ENCODE measurements at regions of chr5 and their contacts with region 1.

Region 1: GRCh38 chr5:10233505-10233904 is 16.2 kb downstream of the ATPSCKMT start:
- DNase-seq: peak; percentile 67 to 71
- H3K4me3 ChIP-seq: no peak overlapping the region
- H3K4me3 Mint-ChIP-seq: no peak overlapping the region
- H3K27ac Mint-ChIP-seq: no peak overlapping the region
- H3K4me1 ChIP-seq: no peaks in the 10 kb centered on the region
- H3K4me1 Mint-ChIP-seq: no peaks in the 10 kb centered on the region
- H3K27me3 ChIP-seq: no peaks in the 10 kb centered on the region
- H3K27me3 Mint-ChIP-seq: no peaks in the 10 kb centered on the region
- CTCF ChIP-seq: peak; percentile 27 to 46

Region 2: DNA sequence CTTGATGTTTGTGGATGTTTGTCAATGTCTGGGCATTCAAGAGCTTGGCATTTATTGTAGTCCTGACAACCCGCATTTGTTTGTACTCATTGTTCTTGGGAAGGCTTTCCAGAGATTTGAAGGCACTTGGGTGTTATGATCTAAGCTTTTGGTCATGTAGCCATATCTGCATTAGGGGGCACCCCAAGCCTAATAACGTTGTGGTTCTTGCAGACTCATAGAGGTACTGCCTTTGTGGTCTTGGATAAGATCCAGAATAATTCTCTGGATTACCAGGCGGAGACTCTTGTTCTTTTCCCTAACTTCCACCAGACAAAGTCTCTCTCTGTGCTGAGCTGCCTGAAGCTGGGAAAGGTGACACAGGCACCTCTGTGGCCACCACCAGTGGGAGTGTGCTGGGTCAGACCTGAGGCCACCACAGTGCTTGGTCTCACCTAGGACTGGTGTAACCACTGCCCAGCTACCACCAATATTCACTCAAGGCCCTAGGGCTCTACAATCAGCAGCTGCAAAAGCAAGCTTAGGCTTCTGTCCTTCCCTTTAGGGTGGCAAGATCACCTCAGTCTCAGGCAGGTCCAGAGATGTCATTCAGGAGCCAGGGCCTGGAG is 458.9 kb before region 1 on chr5:
- CTCF ChIA-PET with region 1: interaction called, 3 read pairs
- POLR2A ChIA-PET with region 1: no interaction called
- intact Hi-C with region 1: loop called (anchors 2 kb)
- DNase-seq: peak in 1 of 2 experiments; percentile 47
- H3K4me3 ChIP-seq: no peak overlapping the region
- H3K4me3 Mint-ChIP-seq: no peak overlapping the region
- H3K27ac Mint-ChIP-seq: no peak overlapping the region
- H3K4me1 ChIP-seq: no peaks in the 10 kb centered on the region
- H3K4me1 Mint-ChIP-seq: no peaks in the 10 kb centered on the region
- H3K27me3 ChIP-seq: no peaks in the 10 kb centered on the region
- H3K27me3 Mint-ChIP-seq: no peaks in the 10 kb centered on the region
- CTCF ChIP-seq: peak in 1 of 2 experiments; percentile 31

Region 3: GRCh38 chr5:9829621-9830567 is 403.6 kb before region 1 on chr5:
- CTCF ChIA-PET with region 1: no interaction called
- POLR2A ChIA-PET with region 1: no interaction called
- intact Hi-C with region 1: loop called (anchors 2 kb)
- DNase-seq: peak in 1 of 2 experiments; percentile 30
- H3K4me3 ChIP-seq: no peak overlapping the region
- H3K4me3 Mint-ChIP-seq: peak overlapping the region; percentile 1
- H3K27ac Mint-ChIP-seq: peak overlapping the region; percentile 14
- H3K4me1 ChIP-seq: peaks cover 53% of the 10 kb centered on the region
- H3K4me1 Mint-ChIP-seq: peaks cover 40% of the 10 kb centered on the region
- H3K27me3 ChIP-seq: no peaks in the 10 kb centered on the region
- H3K27me3 Mint-ChIP-seq: no peaks in the 10 kb centered on the region
- CTCF ChIP-seq: no peak

Region 4: DNA sequence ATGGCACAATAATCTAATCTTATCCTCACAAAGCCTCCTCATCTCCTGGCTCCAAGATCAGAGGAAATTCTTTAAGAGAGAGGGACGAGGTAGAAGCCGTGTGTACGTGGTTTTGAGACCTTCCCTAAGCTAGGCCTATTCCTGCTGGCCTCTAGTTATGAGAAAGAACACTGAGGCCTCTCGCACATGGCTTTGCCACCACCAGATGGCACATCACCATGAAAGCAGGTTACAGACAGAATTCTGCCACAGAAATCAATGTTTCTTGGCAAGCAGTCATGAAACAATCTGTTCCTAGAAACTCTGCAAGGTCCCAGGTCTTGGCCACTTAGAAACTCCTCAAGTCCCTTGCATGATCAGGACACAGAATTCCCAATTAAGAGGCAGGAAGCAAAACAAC is 335.2 kb before region 1 on chr5:
- CTCF ChIA-PET with region 1: no interaction called
- POLR2A ChIA-PET with region 1: no interaction called
- intact Hi-C with region 1: loop called (anchors 5 kb)
- DNase-seq: peak in 1 of 2 experiments; percentile 49
- H3K4me3 ChIP-seq: no peak overlapping the region
- H3K4me3 Mint-ChIP-seq: no peak overlapping the region
- H3K27ac Mint-ChIP-seq: no peak overlapping the region
- H3K4me1 ChIP-seq: no peaks in the 10 kb centered on the region
- H3K4me1 Mint-ChIP-seq: no peaks in the 10 kb centered on the region
- H3K27me3 ChIP-seq: no peaks in the 10 kb centered on the region
- H3K27me3 Mint-ChIP-seq: no peaks in the 10 kb centered on the region
- CTCF ChIP-seq: peak; percentile 55 to 76

Region 5: DNA sequence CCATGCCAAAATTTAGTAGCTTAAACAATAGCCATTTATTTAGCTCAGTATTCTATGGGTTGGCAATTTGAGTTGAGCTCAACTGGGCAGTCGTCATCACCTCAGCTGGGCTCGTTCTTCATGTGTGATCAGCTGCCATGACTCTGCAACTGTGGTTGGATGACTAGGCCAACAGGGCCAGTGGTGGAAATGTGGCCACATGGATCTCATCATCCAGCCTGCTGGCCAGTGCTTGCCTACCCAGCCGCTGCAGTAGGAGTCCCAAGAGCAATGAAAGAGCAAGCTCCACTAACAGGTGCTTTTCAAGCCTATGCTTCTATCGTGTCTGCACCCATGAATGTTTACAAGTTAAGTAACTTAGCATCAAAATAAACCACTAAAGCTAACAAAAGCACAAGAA is 141.8 kb before region 1 on chr5:
- CTCF ChIA-PET with region 1: no interaction called
- POLR2A ChIA-PET with region 1: no interaction called
- intact Hi-C with region 1: no loop called
- DNase-seq: no peak
- H3K4me3 ChIP-seq: no peak overlapping the region
- H3K4me3 Mint-ChIP-seq: no peak overlapping the region
- H3K27ac Mint-ChIP-seq: no peak overlapping the region
- H3K4me1 ChIP-seq: peaks cover 2% of the 10 kb centered on the region; the same call in 1 of the 2 replicates
- H3K4me1 Mint-ChIP-seq: peaks cover 7% of the 10 kb centered on the region
- H3K27me3 ChIP-seq: no peaks in the 10 kb centered on the region
- H3K27me3 Mint-ChIP-seq: no peaks in the 10 kb centered on the region
- CTCF ChIP-seq: no peak

Region 6: GRCh38 chr5:10140195-10140973 is 93.1 kb before region 1 on chr5:
- CTCF ChIA-PET with region 1: no interaction called
- POLR2A ChIA-PET with region 1: no interaction called
- intact Hi-C with region 1: loop called (anchors 1 kb)
- DNase-seq: peak; percentile 41 to 52
- H3K4me3 ChIP-seq: no peak overlapping the region
- H3K4me3 Mint-ChIP-seq: no peak overlapping the region
- H3K27ac Mint-ChIP-seq: no peak overlapping the region
- H3K4me1 ChIP-seq: no peaks in the 10 kb centered on the region
- H3K4me1 Mint-ChIP-seq: no peaks in the 10 kb centered on the region
- H3K27me3 ChIP-seq: no peaks in the 10 kb centered on the region
- H3K27me3 Mint-ChIP-seq: no peaks in the 10 kb centered on the region
- CTCF ChIP-seq: peak; percentile 41 to 51

Region 7: DNA sequence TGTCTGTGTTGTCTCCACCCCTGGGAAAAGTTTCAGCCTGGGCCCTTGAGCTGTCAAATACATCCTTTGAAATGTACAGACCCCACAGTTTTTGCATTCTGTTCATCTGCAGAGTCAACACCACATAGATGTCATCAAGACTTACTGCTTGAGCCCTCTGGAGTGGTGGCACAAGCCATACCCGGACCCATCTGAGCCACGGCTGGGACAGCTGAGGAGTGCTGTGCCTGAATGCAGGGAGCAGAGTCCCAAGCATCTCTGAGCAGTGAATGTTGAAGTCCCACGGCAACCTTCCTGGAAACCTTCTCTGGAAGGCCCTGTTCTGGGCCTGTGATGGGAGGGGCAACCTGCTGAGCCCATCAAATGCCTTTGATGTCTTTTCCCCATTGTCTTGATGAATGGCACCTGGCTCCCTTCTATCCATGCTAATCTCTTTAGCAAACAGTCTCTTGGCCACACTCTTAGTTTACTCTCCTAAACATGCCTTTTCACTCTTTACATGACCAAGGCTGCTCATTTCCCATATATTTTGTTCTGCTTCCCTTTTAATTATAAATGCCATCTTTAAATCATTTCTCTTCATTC is 76.3 kb before region 1 on chr5:
- CTCF ChIA-PET with region 1: interaction called, 4 read pairs
- POLR2A ChIA-PET with region 1: no interaction called
- intact Hi-C with region 1: loop called (anchors 5 kb)
- DNase-seq: peak; percentile 79 to 85
- H3K4me3 ChIP-seq: no peak overlapping the region
- H3K4me3 Mint-ChIP-seq: peak overlapping the region; percentile 62
- H3K27ac Mint-ChIP-seq: peak overlapping the region; percentile 67
- H3K4me1 ChIP-seq: peaks cover 59% of the 10 kb centered on the region
- H3K4me1 Mint-ChIP-seq: peaks cover 39% of the 10 kb centered on the region
- H3K27me3 ChIP-seq: no peaks in the 10 kb centered on the region
- H3K27me3 Mint-ChIP-seq: no peaks in the 10 kb centered on the region
- CTCF ChIP-seq: no peak

Measured in Caco-2 (cell line).